Natural killer cell (primary cell): ENCODE measurements at regions of chr1 and their contacts with region 1.

Region 1: DNA sequence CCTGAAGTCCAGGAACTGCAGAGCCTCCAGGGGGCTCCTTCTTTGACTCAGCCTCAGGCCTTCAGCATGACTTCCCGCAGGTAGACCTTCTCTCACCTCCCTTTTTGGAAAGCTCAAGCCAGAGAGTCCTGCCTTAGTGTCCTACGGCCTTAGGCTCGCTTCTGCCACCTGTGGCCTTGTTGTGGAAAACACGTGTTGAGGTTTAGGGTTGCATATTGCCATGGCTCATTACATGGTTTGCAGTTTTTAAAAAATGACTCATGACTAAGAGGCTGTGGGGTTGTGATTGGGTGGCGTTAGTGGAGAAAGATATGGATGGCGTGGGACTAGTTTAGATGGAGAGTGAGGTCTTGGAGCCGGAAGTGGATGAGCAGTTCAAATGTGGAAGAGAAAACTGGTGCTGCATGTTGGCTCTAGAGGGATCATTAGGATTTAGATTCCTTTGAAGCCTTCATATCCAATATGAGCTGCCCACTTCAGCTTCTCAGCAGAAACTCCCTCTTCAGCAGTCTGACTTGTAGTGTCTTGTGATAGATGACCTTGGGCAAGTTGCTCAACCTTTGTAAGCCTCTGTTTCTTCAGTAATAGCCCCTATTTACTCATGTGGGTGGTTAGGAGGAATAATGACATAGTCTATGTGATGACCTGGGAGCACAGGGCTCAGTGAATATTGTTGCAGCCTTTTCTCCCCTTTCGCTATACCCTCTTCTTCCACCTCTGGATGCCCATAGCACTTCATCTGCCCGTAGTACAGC is 6.5 kb upstream of the FGGY start:
- DNase-seq: peak in 1 of 2 donors; percentile 34
- ATAC-seq: no peak
- H3K4me3 ChIP-seq: no peak overlapping the region
- H3K4me3 Mint-ChIP-seq: no peak overlapping the region
- H3K27ac ChIP-seq: no peak overlapping the region
- H3K27ac Mint-ChIP-seq: peak overlapping the region; percentile 90 to 95
- H3K4me1 ChIP-seq: peaks cover 30% of the 10 kb centered on the region
- H3K4me1 Mint-ChIP-seq: peaks cover 52 to 58% of the 10 kb centered on the region in 2 donors
- H3K27me3 ChIP-seq: no peaks in the 10 kb centered on the region
- H3K27me3 Mint-ChIP-seq: peaks cover under 1 to 2% of the 10 kb centered on the region in 2 donors
- CTCF ChIP-seq: no peak

Region 2: DNA sequence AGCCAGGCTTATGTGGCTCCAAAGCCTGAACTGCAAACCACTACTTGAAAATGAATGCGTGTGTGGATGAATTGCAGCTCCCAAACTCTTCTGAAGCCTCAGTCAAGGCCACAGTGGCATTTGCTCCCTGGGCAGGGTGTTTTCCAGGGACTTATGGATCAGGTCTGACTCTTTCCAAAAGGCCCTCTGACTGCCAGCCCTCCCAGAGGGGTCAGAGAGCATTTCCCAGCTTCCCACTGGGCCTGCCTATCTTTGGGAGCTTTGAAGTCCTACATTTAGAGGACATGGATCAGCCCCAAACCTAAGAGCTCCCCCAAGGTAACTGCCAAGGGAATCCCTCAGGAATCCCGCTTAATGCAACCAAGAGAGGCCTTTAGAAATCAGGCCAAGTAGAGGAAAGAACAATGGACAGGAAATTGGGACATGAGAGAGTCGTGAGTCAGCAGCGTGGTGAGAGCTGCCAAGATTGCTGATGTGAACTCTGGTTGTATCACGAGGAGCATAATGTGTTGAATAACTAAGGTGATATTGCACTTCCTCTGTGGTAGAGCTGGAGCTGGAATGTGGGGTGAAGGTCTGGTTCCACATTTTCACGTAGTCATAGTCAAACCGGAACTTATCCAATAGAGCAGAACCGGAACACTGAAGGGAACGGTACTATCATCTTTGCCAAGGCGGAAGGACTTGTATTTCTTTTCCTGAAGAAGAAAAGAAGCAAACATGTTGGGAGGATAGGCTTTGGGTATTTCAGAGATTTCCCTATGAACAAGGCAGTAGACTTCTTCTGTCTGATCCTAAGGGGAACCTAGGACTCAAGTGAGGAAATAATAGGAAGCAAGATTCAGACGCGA is 407.1 kb before region 1 on chr1:
- intact Hi-C with region 1: loop called (anchors 1 kb)
- DNase-seq: peak in 1 of 2 donors; percentile 21
- ATAC-seq: peak in 2 of 3 donors; percentile 21 to 69
- H3K4me3 ChIP-seq: no peak overlapping the region
- H3K4me3 Mint-ChIP-seq: no peak overlapping the region
- H3K27ac ChIP-seq: peak overlapping the region; percentile 20
- H3K27ac Mint-ChIP-seq: peak overlapping the region in 1 of 2 donors; percentile 5
- H3K4me1 ChIP-seq: peaks cover 43% of the 10 kb centered on the region
- H3K4me1 Mint-ChIP-seq: peaks cover 51 to 88% of the 10 kb centered on the region in 2 donors
- H3K27me3 ChIP-seq: no peaks in the 10 kb centered on the region
- H3K27me3 Mint-ChIP-seq: no peaks in the 10 kb centered on the region
- CTCF ChIP-seq: no peak

Region 3: DNA sequence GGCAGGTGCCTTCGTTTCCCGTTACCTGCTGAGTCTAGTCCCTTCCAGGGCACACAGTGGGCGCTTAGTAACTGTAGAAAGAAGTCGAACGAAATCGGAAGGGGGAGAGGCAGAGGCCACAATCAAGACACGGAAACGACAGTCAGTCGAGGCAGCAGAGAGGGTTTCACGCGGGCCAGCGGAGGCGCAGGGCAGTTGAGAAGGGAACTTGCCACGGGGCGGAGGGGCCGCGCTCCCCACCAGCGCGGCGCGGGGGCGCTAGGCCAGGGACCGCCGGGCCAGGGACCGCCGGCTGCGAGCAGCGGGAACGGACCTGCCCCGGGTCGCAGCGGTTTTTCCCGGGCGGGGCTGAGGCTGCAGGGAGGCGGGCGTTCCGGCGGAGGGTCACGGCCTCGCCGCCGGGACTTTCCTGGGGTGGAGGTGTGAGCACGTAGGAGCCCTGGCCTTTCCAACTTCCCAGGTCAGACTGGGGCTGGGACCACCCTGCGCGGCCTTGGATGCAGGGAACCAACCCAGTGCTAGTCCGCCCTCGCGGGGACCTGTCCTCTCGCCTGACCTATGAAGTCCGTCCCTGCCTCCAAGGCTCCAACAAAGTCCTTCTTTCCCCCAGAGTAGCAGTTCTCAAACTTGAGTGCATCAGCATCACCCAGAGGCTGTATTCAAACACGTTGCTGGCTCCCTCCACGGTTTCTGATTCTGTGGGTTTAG is 143.6 kb before region 1 on chr1:
- intact Hi-C with region 1: loop called (anchors 5 kb)
- DNase-seq: peak; percentile 68 to 72
- ATAC-seq: peak; percentile 85 to 90 (median 86)
- H3K4me3 ChIP-seq: peak overlapping the region; percentile 54
- H3K4me3 Mint-ChIP-seq: peak overlapping the region; percentile 87
- H3K27ac ChIP-seq: peak overlapping the region; percentile 59
- H3K27ac Mint-ChIP-seq: peak overlapping the region; percentile 82 to 85
- H3K4me1 ChIP-seq: peaks cover 14% of the 10 kb centered on the region
- H3K4me1 Mint-ChIP-seq: peaks cover 21 to 28% of the 10 kb centered on the region in 2 donors
- H3K27me3 ChIP-seq: no peaks in the 10 kb centered on the region
- H3K27me3 Mint-ChIP-seq: no peaks in the 10 kb centered on the region
- CTCF ChIP-seq: peak; percentile 7

Region 4: DNA sequence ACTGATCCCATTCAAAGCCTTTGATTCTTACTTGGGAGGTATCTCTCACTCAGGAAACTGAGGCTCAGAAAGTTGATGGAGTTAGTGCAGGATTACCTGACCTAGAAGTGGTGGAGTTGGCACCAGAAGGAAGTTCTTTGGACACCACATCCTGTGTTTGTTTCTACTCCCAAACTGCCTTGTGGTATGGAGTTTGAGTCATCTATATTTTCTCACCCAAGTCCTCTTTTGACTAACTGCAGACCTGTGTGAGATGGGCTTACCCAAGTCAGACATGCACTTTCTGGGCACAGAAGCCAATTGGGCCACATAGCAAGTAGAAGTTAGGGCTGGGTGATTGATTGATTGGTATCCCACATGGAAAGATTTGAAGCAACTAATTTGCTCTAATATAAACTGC is 42.6 kb after region 1 on chr1:
- intact Hi-C with region 1: loop called (anchors 5 kb)
- DNase-seq: no peak
- ATAC-seq: peak in 2 of 3 donors; percentile 36 to 47
- H3K4me3 ChIP-seq: no peak overlapping the region
- H3K4me3 Mint-ChIP-seq: peak overlapping the region; percentile 35
- H3K27ac ChIP-seq: no peak overlapping the region
- H3K27ac Mint-ChIP-seq: peak overlapping the region; percentile 43 to 81
- H3K4me1 ChIP-seq: peaks cover 10% of the 10 kb centered on the region
- H3K4me1 Mint-ChIP-seq: peaks cover 18 to 32% of the 10 kb centered on the region in 2 donors
- H3K27me3 ChIP-seq: no peaks in the 10 kb centered on the region
- H3K27me3 Mint-ChIP-seq: no peaks in the 10 kb centered on the region
- CTCF ChIP-seq: no peak